Cardiac septum (tissue), 1 donor: ENCODE measurements at regions of chr3 and their contacts with region 1.

Region 1: DNA sequence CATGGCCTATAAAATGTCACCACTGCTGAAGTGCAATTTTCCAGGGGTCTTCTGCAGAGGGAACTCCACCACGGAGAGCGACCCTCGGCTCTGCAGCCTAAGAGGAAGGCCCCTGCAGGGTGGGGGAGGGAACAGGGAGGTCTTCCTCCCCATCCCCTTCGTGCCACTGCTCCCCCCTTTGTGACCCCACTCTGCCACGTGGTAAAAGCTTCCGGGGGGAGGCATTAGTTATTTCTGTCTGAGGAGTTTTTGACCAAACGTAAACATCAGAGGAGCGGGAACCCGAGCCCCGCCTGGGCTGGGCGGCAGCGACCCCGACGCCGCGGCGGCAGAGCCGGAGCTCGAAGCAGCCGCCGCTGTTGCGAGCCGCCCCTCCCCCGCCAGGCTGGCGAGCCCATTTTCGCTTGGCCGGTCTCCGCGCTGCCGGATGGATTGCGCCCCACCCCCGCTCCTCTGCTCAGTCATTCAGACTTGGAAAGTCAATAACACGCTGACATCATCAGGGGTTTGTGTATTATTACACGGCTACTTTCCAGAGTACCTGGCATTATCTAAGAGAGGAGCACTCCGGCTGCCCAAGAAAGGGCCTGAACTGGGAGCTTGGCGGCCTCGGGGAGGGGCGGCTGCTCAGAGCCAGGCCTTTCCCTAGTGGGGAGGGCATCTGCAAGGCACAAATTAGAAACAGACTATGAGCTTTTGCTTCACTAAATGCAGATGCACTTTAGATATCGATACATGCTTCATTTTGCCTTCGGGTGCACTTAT is 162.5 kb upstream of the TBL1XR1 start:
- DNase-seq: peak; percentile 97

Region 2: GRCh38 chr3:177126015-177126773 is 233.6 kb before region 1 on chr3:
- intact Hi-C with region 1: loop called (anchors 5 kb)
- DNase-seq: no peak

Region 3: DNA sequence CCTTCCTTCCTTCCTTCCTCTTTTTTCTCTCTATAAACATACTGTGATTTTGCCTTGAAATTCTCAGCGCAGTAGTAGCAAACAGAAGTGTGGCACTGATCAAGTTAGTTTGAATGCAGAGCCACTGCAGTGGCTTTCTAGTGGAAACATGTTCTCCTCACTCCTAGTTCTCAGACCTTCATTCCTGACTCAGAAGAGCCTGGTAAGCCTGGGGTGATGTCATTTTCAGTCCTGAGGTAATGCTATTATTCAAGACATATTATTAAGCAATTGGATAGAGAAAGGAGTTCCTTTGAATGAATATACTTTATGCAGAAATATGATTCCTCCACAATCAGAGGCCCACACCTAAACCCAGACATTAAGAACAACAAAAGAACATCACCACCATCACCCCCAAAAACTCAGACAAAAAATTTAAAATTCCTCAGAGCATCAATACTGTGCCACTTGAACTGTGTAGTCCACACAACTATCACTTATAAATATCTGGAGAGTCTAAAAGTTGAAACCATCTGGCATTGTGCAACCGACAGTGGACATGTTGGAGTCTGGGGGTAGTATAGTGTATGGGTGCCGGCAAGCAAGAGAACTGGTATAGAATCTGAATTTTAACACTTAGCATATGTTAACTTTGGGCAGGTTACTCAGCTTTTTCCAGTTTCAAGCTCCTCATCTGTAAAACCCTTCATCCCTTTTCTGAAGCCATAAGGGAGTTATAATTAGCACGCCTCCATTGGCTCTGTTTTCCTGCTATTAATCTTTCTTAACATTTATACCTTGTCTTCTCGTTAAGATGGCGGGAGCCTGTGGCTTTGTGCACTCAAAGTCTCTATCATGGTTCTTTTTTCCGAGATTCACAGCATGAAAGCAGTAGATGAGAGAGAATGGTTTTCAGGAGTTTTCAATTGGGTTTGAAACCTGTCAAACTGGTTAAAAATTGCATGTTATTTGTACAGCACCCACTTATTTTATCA is 93.0 kb after region 1 on chr3:
- intact Hi-C with region 1: loop called (anchors 5 kb)
- DNase-seq: no peak

Region 4: DNA sequence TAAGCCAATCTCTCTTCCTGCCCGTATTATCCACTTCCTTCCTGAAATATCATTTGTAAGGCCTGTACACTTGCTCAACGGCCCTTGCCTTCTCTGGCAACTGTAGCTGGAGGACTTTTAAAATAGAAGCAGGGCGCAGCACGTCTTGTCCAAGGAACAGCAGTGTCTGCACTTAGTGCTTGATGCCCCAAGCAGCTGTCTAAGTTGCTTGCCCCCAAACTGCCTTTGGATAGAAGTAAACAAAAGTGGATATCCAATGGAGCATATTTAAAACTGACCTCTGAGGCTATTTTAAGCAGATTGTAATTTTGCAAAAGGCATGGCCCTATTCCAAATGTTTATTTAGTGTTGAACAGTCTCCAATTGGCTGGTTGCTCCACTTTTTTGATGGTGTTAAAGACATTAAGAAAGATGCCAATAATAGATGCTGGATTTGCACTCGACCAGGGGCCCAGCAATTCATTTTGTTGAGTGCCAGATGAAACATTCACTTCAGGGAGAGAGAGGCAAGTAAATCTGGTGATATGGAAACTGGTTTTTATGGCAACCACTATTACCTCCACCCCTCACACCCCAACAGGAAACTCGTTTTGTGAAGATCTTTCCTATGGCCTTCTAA is 364.4 kb after region 1 on chr3:
- intact Hi-C with region 1: loop called (anchors 2 kb)
- DNase-seq: no peak

Region 5: GRCh38 chr3:178325330-178325729 is 965.6 kb after region 1 on chr3:
- intact Hi-C with region 1: loop called (anchors 5 kb)
- DNase-seq: no peak